Activated CD4-positive, alpha-beta T cell treated with anti-CD3 and anti-CD28 coated beads for 36 hours (primary cell): ENCODE measurements at regions of chr10 and their contacts with region 1.

Region 1: GRCh38 chr10:124688889-124689670 is 55.1 kb downstream of the FAM53B start:
- DNase-seq: peak; percentile 81
- ATAC-seq: peak; percentile 89
- H3K4me3 Mint-ChIP-seq: peak overlapping the region; percentile 8
- H3K27ac Mint-ChIP-seq: peak overlapping the region; percentile 84
- H3K4me1 Mint-ChIP-seq: peaks cover 81% of the 10 kb centered on the region
- H3K27me3 Mint-ChIP-seq: peaks cover 2% of the 10 kb centered on the region

Region 2: DNA sequence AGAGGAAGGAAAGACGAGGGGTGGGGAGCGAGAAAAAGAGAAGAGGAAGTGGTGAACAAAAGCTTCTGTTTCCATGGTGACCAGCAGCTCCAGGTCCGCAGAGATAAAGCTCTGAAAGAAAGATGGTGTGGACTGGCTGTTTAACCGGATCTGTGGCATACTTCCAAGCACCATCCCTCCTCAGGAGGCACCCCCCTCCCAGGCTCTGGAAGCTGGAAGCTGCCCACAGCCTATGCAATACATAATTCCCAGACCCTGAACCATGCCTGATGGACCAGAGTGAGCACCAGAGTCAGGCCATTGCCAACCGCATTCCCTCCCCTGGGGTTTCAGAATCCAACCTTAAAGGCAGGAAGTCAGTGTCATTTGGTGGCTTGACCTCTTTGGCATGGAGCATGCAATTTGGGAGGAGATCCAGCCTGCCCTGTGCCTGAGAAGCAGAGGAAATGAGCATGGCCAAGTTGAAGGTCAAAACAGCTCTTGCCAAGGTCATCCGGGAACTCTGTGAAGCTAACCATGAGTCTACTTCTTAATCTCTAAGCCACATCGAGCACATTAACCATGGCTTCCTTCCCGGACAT is 775.3 kb before region 1 on chr10:
- CTCF ChIA-PET with region 1: no interaction called
- POLR2A ChIA-PET with region 1: no interaction called
- intact Hi-C with region 1: no loop called
- DNase-seq: no peak
- ATAC-seq: no peak
- H3K4me3 Mint-ChIP-seq: no peak overlapping the region
- H3K27ac Mint-ChIP-seq: no peak overlapping the region
- H3K4me1 Mint-ChIP-seq: no peaks in the 10 kb centered on the region
- H3K27me3 Mint-ChIP-seq: peaks cover 36% of the 10 kb centered on the region

Region 3: GRCh38 chr10:124450012-124450781 is 238.9 kb before region 1 on chr10 and contains the start of gene NKX1-2:
- CTCF ChIA-PET with region 1: no interaction called
- POLR2A ChIA-PET with region 1: no interaction called
- intact Hi-C with region 1: no loop called
- DNase-seq: peak; percentile 49
- ATAC-seq: peak; percentile 49
- H3K4me3 Mint-ChIP-seq: peak within 1 kb of the TSS; percentile 23
- H3K27ac Mint-ChIP-seq: no peak within 1 kb of the TSS
- H3K4me1 Mint-ChIP-seq: peaks cover 17% of the 10 kb centered on the region
- H3K27me3 Mint-ChIP-seq: peaks cover 75% of the 10 kb centered on the region
- total RNA-seq, gene NKX1-2: not detected

Region 4: DNA sequence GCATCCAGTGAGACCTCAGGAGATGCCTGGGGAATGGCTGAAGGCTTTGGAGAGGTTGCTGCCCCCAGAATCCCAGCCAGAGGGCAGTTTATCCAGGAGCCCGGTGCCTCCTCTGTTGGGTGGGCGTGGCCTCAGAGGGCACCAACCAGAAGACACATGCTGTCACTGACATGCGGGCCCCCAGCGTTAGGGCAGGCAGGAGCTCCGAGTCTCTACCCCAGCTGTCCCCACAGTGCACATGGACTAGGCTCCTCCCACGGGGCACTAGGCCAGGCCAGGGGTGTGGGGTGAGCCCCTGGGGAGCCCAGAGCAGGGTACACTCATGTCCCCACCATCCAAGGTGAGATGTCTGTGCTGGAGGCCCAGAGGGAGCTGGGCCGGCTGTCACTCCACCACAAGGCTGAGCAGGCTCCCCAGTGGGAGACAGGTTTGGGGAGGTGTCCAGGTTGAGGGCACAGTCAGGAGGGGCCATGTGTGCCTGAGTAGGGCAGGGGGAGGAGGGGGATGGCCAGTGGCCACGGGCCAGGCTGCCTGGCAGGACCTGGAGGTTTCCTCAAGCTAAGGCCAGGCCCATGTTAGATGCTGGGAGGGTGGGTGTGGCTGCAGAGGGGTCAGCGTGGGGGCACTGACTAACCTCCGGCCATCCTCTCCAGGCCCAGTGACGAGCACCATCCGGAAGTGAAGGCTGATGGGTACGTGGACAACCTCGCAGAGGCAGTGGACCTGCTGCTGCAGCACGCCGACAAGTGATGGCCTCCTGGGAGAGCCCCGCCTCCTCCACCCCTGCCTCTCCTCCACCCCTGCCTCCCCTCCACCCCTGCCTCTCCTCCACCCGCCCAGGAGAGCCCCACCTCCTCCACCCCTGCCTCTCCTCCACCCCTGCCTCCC is 76.2 kb before region 1 on chr10:
- CTCF ChIA-PET with region 1: interaction called, 3 read pairs
- POLR2A ChIA-PET with region 1: no interaction called
- intact Hi-C with region 1: loop called in 1 of 2 experiments (anchors 1 kb)
- DNase-seq: peak; percentile 43
- ATAC-seq: peak; percentile 30
- H3K4me3 Mint-ChIP-seq: no peak overlapping the region
- H3K27ac Mint-ChIP-seq: no peak overlapping the region
- H3K4me1 Mint-ChIP-seq: peaks cover 36% of the 10 kb centered on the region
- H3K27me3 Mint-ChIP-seq: no peaks in the 10 kb centered on the region

Region 5: DNA sequence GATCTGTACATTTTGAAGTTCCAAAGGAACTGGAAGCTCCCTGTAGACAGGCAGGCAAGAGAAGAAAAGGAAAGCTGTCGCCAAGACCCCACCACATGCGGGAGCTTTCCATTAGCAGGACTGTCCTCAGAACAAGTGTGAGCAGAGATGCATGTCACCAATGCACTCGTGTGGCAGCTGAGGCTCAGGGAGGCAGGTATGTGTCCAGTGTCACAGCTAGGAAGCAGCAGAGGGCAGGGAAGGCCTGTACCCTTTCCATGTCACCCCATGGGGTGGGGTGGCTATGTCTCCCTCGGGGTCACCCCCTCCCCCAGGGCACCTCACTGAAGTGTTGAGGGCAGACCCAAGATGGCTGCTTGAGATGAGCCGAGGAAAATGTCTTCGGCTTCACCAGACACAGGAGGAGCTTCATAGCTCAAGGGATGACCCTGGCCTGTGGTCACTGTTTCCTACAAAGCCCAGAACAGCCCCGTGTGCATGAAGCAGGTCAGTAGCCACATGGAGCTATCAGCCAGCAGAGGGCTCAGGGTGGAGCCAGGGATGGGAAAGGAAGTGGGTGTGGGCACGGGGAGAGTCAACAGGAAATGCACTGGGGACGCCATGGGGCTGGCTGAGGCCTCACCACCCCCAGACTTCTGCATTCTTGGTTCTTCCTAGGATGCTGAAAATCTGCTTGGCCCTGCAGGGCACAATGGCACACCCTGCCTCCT is 41.5 kb before region 1 on chr10:
- CTCF ChIA-PET with region 1: interaction called, 12 read pairs
- POLR2A ChIA-PET with region 1: interaction called, 7 read pairs
- intact Hi-C with region 1: loop called (anchors 1 to 2 kb)
- DNase-seq: peak; percentile 80
- ATAC-seq: peak; percentile 74
- H3K4me3 Mint-ChIP-seq: peak overlapping the region; percentile 40
- H3K27ac Mint-ChIP-seq: peak overlapping the region; percentile 85
- H3K4me1 Mint-ChIP-seq: peaks cover 75% of the 10 kb centered on the region
- H3K27me3 Mint-ChIP-seq: no peaks in the 10 kb centered on the region

Region 6: GRCh38 chr10:124671486-124672075 is 17.5 kb before region 1 on chr10:
- CTCF ChIA-PET with region 1: interaction called, 64 read pairs
- POLR2A ChIA-PET with region 1: interaction called, 3 read pairs
- intact Hi-C with region 1: no loop called
- DNase-seq: peak; percentile 50
- ATAC-seq: peak; percentile 71
- H3K4me3 Mint-ChIP-seq: no peak overlapping the region
- H3K27ac Mint-ChIP-seq: peak overlapping the region; percentile 55
- H3K4me1 Mint-ChIP-seq: peaks cover 66% of the 10 kb centered on the region
- H3K27me3 Mint-ChIP-seq: no peaks in the 10 kb centered on the region

Region 7: GRCh38 chr10:124677749-124678556 is 11.1 kb before region 1 on chr10:
- CTCF ChIA-PET with region 1: interaction called, 64 read pairs
- POLR2A ChIA-PET with region 1: interaction called, 6 read pairs
- intact Hi-C with region 1: loop called in 1 of 2 experiments (anchors 1 kb)
- DNase-seq: peak; percentile 30
- ATAC-seq: peak; percentile 40
- H3K4me3 Mint-ChIP-seq: no peak overlapping the region
- H3K27ac Mint-ChIP-seq: peak overlapping the region; percentile 75
- H3K4me1 Mint-ChIP-seq: peaks cover 70% of the 10 kb centered on the region
- H3K27me3 Mint-ChIP-seq: no peaks in the 10 kb centered on the region

Region 8: DNA sequence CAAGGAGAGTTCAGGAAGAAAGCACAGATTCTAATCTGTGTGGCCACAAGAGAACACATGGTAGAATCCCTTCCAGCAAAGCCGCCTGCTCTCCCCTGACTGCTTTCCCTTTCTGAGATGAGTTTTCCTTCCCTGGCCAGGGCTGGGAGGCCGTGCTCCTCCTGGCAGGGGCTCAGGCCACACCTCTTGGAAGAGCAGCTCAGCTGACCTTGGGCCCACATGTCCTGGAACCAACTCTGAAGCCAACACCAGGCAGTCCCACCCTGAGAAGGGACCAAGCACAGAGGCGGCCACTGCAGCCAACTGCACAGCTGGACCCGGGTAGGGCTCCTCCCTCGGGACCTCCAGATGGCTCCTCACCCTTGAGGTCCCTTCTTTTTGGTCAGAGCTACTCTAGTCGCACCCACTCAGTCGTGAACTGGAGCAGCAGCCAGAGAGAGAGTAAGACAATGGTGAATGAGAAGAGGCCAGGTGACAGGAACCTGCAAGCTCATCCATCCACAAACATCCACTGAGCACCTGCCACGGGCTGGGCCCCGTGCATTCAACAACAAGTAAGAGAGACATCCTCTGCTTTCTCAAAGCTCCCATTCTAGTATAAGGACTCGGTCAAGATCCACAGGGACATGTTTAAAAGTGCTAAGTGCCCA is 14.8 kb after region 1 on chr10:
- CTCF ChIA-PET with region 1: interaction called, 13 read pairs
- POLR2A ChIA-PET with region 1: interaction called, 6 read pairs
- intact Hi-C with region 1: no loop called
- DNase-seq: no peak
- ATAC-seq: no peak
- H3K4me3 Mint-ChIP-seq: no peak overlapping the region
- H3K27ac Mint-ChIP-seq: peak overlapping the region; percentile 75
- H3K4me1 Mint-ChIP-seq: peaks cover 93% of the 10 kb centered on the region
- H3K27me3 Mint-ChIP-seq: no peaks in the 10 kb centered on the region

Region 9: DNA sequence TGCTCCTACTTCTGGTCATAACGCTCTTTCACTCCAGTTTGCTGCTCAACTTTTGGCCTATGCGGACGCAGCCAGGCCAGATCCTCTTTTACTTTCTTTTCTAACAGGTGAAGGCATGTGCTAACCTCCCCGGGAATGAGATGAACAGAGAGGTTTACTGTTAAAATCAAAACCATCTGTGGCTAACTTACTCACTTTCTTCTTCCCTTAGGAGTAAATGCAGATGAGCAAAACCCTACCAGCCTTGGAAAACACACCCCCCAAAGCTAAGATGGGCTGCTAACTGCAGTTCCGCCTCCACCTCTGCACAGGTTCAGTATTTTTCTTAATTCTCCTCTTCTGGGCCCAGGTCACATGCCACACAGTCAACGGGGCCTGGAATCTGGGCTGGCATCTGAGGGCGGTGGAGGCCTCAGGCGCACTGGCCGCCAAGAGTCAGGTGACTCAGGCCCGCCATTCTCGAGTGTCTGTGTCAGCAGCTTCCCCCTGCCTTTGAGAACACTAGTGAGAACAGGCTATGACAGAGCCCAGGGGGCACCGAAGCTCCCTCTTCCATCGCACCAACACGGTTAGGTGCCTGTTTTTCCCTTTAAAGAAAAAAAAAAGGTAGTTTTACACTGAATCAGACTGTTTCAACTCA is 44.0 kb after region 1 on chr10:
- CTCF ChIA-PET with region 1: interaction called, 30 read pairs
- POLR2A ChIA-PET with region 1: interaction called, 21 read pairs
- intact Hi-C with region 1: loop called (anchors 1 kb)
- DNase-seq: peak; percentile 87
- ATAC-seq: peak; percentile 71
- H3K4me3 Mint-ChIP-seq: peak overlapping the region; percentile 43
- H3K27ac Mint-ChIP-seq: peak overlapping the region; percentile 76
- H3K4me1 Mint-ChIP-seq: peaks cover 84% of the 10 kb centered on the region
- H3K27me3 Mint-ChIP-seq: no peaks in the 10 kb centered on the region

Region 10: DNA sequence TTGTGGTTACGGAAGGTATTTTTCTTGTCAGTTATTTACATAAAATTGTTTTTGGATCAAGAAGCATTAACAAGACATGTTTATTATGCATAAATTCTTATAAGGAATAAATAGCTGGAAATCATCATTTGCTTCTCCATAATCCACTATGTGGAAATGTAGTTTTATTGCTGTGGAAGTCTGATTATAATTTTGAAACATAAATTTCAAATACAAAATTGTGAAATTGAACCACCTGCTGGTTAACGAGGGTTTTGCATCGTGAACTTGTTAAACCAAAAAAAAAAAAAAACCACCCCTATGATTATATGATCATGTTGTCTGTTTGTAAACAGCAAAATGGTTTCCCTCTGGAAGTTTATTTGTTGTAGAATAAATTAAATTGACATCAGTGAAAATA is 138.4 kb after region 1 on chr10:
- CTCF ChIA-PET with region 1: no interaction called
- POLR2A ChIA-PET with region 1: no interaction called
- intact Hi-C with region 1: no loop called
- DNase-seq: peak; percentile 11
- ATAC-seq: no peak
- H3K4me3 Mint-ChIP-seq: no peak overlapping the region
- H3K27ac Mint-ChIP-seq: no peak overlapping the region
- H3K4me1 Mint-ChIP-seq: peaks cover 2% of the 10 kb centered on the region
- H3K27me3 Mint-ChIP-seq: no peaks in the 10 kb centered on the region

Region 11: GRCh38 chr10:125605167-125605566 is 916.1 kb after region 1 on chr10:
- CTCF ChIA-PET with region 1: no interaction called
- POLR2A ChIA-PET with region 1: no interaction called
- intact Hi-C with region 1: no loop called
- DNase-seq: no peak
- ATAC-seq: no peak
- H3K4me3 Mint-ChIP-seq: no peak overlapping the region
- H3K27ac Mint-ChIP-seq: no peak overlapping the region
- H3K4me1 Mint-ChIP-seq: no peaks in the 10 kb centered on the region
- H3K27me3 Mint-ChIP-seq: no peaks in the 10 kb centered on the region